ENCODE measurements at regions of chr4 and their contacts with region 1.

Region 1: DNA sequence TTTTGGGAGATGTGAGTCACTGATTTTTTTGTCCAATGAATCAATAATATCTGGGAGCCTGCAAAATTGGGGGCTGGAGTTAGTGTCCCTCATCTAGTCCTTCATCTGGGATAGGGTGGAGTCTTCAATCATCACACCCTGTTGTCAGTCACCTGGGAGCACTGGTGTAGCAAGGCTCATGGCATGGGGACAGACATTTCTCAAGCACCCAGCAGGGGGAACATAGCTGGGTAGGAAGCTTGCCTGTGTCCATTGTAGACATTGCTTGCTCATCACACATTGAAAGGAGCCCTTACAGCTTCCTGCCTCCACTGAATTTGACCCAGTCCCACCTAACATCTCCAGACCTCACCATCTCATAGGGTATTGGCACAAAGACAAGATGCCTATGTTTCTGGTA is 61.2 kb downstream of the SEL1L3 start:
- DNase-seq: no peak
- H3K4me3 ChIP-seq: no peak overlapping the region
- CTCF ChIP-seq: no peak

Region 2: DNA sequence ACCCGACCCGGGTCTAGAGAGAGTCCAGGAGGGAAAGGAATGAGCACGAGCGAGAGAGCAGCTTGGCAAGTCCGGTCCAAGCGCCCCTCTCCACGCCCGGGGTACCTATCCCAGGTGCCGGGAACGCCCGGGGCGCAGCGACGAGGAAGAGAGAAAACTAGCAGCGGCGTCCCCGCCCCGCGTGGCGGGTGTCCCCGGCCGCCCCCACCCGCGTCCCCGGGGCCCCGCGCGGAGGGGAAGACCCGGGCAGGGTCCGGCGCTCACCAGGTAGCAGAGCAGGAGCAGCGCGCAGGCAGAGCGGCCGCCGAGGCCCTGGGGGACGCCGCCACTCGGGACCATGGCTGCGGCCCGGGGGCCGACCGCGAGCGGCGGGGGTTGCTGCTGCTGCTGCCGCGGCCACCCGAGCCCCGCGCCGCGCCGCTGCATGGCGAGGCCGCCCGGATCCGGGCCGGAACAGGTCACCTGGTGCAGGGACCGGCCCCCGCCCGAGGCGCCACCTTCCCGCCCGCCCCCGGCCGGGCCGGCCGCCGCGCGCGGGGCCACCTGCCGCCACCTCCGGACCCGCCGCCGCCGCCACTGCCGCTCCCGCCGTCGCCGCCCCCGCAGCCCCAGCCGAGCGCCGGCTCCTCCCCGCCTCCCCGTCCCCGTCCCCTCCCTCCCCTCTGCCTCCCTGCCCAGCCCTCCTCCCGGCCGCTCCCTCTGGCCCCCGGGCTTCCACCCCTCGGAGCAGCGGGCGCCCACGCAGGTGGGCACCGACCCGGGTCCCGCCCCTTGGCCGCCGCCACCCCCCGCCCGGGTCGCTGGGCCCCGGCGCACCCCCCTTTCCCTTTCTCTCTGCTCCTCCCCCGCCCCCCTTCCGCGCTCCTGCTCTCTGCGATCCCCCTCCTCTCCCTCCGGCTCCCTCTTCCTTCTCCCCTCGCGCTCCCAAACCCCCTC is 61.1 kb after region 1 on chr4 and contains the start of gene SEL1L3:
- in situ Hi-C with region 1: loop called (anchors 5 kb)
- DNase-seq: no peak
- H3K4me3 ChIP-seq: peak within 1 kb of the TSS; percentile 51
- CTCF ChIP-seq: no peak

Region 3: GRCh38 chr4:25875281-25875745 is 73.7 kb after region 1 on chr4:
- in situ Hi-C with region 1: no loop called
- DNase-seq: no peak
- H3K4me3 ChIP-seq: no peak overlapping the region
- CTCF ChIP-seq: no peak